Dendritic cell treated with granulocyte-macrophage colony-stimulating factor and Interleukin-4, amounts not matched to agents 40 ng/mL and 50 ng/mL, for 4 days (primary cell): ENCODE measurements at regions of chr11 and their contacts with region 1.

Region 1: GRCh38 chr11:122628810-122629555 is 26.5 kb upstream of the UBASH3B start:
- H3K4me3 Mint-ChIP-seq: no peak overlapping the region
- H3K27ac Mint-ChIP-seq: peak overlapping the region; percentile 40
- H3K4me1 Mint-ChIP-seq: peaks cover 7% of the 10 kb centered on the region
- H3K27me3 Mint-ChIP-seq: no peaks in the 10 kb centered on the region

Region 2: DNA sequence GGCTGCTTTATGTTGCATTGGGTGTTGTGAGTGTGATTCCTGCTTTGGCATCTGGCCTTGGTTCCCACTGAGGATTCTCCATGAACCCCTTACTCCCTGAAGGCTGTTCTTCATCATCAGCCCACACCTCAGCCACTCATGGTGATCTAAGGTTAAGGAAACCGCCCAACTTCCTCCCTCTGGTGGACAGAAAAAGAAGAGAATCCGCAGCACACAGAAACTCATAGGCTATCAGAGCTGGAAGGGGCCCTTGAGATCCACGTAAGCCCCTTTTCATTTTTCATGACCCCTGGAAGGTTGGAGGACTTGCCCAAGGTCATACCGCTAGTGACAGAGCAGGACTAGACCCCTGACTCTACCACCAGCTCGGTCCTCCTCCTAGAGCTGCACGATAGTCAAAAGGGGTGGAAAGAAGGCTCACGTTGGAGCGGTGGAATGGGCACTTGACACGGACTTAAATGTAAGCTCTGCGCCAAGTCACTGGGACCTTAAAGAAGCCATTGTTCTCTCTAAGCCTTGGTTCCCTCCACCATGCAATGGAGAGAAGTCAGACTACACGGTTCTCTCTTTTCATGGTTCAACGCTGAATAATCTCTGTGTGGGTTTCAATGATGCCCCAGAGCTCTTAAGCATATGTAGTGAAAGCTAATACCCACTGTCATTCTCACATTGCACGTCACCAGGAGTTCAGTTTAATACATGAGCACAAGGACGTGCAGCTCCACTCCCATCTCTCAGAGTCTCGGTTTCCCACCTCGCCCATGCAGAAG is 125.8 kb after region 1 on chr11:
- intact Hi-C with region 1: loop called (anchors 2 kb)
- H3K4me3 Mint-ChIP-seq: peak overlapping the region; percentile 6
- H3K27ac Mint-ChIP-seq: peak overlapping the region; percentile 80
- H3K4me1 Mint-ChIP-seq: peaks cover 74% of the 10 kb centered on the region
- H3K27me3 Mint-ChIP-seq: no peaks in the 10 kb centered on the region

Region 3: DNA sequence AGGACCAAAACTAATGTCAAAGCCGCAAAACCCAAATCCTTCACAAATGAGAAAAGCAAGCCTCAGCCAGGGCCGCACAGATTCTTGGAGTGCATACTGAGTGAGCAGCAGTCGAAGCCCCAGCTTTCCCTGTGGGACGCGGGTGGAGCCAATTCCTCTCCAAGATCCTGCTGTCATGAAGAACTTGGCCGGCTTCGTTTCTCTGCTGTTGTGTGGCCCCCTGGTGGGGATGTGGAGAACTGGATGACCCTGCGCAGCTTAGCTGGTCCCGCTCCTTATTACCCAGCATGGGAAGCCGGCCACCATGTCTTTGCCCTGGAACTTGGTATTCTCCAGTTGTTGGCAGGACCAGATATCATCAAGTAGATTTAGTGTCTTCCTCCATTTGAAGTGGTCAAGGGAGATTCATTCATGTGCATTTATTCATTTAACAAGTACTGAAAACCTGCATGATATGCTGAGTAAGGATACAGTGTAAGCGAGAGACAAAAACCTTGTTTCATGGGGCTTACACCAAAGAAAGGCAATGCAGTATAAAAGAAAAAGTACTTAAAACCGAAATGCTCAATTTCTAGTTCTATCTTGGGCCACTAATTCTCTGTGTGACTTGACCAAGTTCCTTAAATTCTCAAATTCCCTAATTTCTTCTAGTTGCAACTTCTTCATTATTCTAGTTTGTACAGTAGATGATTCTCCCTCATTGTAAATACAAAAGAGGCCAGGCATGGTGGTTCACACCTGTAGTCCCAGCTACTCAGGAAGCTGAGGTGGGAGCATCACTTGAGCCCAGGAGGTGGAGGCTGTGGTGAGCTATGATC is 152.6 kb after region 1 on chr11:
- intact Hi-C with region 1: loop called (anchors 1 kb)
- H3K4me3 Mint-ChIP-seq: peak overlapping the region; percentile 13
- H3K27ac Mint-ChIP-seq: no peak overlapping the region
- H3K4me1 Mint-ChIP-seq: peaks cover 46% of the 10 kb centered on the region
- H3K27me3 Mint-ChIP-seq: peaks cover 4% of the 10 kb centered on the region

Region 4: DNA sequence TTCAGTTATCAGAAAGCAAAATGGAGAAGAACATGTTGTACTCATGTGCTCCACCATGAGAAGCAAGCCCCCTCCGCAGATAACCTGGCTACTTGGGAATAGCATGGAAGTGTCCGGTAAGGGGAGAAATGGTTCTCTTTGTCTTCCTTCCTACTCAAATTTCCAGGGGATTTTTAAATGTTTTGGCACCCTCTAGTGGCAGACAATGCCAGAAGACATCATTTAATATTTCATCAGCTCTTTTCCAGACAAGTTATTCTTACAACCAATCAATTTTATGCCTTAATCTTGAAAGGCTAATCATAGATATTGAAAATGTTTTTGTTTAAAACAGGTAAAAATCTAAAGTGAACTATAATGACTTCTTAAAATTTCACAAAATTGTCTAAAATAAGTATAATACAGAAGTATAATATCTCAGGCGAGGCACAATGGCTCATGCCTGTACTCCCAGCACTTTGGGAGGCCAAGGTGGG is 225.0 kb after region 1 on chr11:
- intact Hi-C with region 1: loop called (anchors 2 kb)
- H3K4me3 Mint-ChIP-seq: no peak overlapping the region
- H3K27ac Mint-ChIP-seq: no peak overlapping the region
- H3K4me1 Mint-ChIP-seq: peaks cover 50% of the 10 kb centered on the region
- H3K27me3 Mint-ChIP-seq: no peaks in the 10 kb centered on the region

Region 5: GRCh38 chr11:123020968-123021367 is 392.0 kb after region 1 on chr11:
- intact Hi-C with region 1: loop called (anchors 5 kb)
- H3K4me3 Mint-ChIP-seq: no peak overlapping the region
- H3K27ac Mint-ChIP-seq: no peak overlapping the region
- H3K4me1 Mint-ChIP-seq: peaks cover 12% of the 10 kb centered on the region
- H3K27me3 Mint-ChIP-seq: peaks cover 15% of the 10 kb centered on the region